Heart left ventricle (tissue), 16 donors: ENCODE measurements at regions of chr7 and their contacts with region 1.

Region 1: DNA sequence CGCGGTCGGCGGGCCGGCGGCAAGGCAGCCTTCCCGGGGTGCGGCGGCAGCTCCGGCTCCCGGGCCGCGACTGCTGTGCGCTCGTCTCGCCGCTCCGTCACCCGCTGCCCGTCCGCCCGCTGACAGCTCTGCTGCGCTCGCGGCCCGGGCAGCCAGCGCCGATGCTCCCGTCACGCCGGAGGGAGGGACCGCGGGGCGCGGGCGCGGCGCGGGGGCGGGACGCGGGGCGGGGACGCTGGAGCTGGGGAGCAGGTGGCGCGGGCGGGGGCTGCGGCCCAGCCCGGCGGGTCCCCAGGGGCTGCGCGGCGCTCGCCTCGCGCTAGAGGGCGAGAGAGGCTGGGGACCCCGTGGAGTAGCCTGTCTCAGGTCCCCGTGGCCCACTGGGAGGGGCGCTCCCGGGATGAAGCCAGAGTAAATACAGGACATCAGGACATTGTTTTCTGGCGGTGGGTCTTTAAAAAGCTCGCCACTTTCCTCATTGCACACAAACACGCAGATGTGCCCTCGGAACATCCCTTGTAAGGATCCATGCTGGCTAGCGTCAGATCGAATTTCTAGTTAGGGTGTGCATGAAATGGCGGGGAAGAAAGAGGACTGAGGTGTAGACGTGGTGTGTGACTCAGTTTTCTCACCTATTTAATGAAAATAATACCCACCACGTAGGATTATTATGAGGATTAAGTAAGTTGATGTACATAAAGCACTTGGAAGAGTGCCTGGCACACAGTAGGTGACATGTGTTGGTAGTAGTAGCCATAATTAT is at the start of gene ELAPOR2:
- DNase-seq: peak; percentile 80 to 86 (median 81)
- ATAC-seq: peak; percentile 82 to 99 (median 97)
- H3K4me3 ChIP-seq: peak within 1 kb of the TSS; percentile 39 to 88 (median 66)
- H3K27ac ChIP-seq: peak within 1 kb of the TSS in 9 of 12 donors; percentile 10 to 62 (median 35)
- H3K4me1 ChIP-seq: peaks cover 0 to 36% (median 11%) of the 10 kb centered on the region in 12 donors
- H3K27me3 ChIP-seq: peaks cover 0 to 13% (median 0%) of the 10 kb centered on the region in 9 donors
- CTCF ChIP-seq: peak; percentile 13 to 68 (median 54)
- POLR2A ChIP-seq: peak in 1 of 2 donors; percentile 52
- total RNA-seq, gene ELAPOR2: 2.5 to 9.9 (median 4.4) TPM

Region 2: DNA sequence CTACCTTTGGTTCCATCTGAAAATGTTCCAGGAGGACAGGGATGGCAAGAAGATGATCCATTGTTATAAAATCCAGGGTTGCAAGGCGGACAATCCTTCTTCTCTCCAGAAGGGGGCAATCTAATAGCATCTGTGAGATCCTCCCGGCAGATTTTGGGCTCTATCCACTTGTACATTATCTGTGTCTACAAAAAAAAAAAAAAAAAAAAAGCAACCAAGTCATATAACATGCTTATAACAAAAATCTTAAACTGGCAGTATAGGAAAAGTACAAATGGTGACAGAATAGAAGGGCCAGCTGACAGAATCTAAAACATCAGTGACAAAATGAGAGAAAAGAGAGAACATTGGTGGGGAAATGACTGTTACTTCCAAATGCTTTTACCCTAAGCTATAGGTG is 133.0 kb before region 1 on chr7:
- intact Hi-C with region 1: loop called in 2 of 10 experiments (anchors 5 to 10 kb)
- DNase-seq: no peak
- ATAC-seq: peak in 2 of 4 donors; percentile 38 to 59
- H3K4me3 ChIP-seq: no peak overlapping the region
- H3K27ac ChIP-seq: no peak overlapping the region
- H3K4me1 ChIP-seq: peaks cover 0 to 5% (median 2%) of the 10 kb centered on the region in 12 donors
- H3K27me3 ChIP-seq: no peaks in the 10 kb centered on the region
- CTCF ChIP-seq: peak; percentile 37 to 74 (median 64)
- POLR2A ChIP-seq: no peak

Region 3: DNA sequence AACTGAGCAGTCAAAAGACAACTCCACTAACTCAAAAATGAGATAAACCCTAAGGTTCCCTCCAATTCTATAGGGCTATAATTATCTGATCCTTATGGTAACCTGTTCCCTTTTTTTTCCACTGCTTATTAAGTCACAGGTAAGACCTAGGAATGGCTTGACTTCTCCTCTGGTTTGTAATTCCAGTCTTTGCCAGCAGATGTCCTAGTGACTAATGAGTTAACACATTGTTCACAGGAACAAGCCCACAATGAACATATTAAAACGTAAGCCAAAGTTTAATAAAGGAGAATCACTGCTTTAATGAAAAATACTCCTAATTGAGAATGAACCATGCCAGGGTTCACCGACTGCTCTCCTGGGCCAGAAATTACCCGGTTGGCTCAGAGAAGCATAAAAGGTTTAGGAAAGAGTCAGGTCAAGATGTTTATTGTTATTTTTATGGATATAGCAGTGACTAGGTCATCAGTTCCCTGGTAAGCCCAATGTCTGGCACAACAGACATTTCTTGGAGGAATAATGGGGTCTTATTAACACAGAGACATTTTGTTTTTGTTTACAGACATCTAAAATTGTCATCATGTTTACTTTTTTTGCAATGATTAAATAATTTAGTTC is 120.4 kb before region 1 on chr7:
- intact Hi-C with region 1: loop called in 6 of 10 experiments (anchors 5 to 10 kb)
- DNase-seq: peak in 2 of 5 donors; percentile 26 to 29
- ATAC-seq: peak in 3 of 4 donors; percentile 52 to 76 (median 54)
- H3K4me3 ChIP-seq: no peak overlapping the region
- H3K27ac ChIP-seq: no peak overlapping the region
- H3K4me1 ChIP-seq: no peaks in the 10 kb centered on the region
- H3K27me3 ChIP-seq: no peaks in the 10 kb centered on the region
- CTCF ChIP-seq: peak; percentile 54 to 76 (median 72)
- POLR2A ChIP-seq: no peak

Region 4: DNA sequence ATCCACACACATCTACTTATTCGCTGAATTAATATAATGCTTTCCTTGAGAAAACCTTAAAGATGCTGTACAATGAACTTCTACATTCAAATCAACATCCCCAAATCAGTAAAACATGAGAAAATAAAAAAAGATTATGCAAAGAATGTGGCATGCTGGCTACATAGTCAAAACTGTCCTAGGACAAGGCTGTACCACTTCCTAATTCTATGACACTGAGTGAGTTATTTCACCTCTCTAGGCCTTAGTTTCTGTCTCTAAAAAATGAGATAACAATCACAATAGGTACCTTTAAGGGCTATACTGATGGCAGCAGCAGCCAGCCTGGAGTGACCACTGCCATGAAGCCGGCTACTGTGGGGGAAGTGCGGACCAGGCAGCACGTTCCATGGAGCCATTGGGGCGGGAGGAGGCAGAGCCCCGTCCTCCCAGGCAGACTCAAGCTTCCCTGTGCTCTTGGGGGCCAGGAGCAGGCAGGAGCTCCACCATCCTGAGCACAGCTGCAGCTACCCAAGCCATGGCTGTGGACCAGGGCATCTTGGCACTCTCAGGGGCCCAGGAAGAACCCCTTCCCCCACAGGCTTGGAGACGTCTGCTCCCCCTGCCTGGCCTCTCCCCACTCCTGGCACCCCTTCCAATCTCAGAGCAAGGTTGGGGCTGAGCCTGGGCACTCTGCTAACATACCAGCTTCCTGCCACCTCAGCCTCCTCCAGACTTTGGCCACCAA is 110.5 kb before region 1 on chr7:
- intact Hi-C with region 1: loop called in 2 of 10 experiments (anchors 5 to 10 kb)
- DNase-seq: peak in 1 of 5 donors; percentile 51
- ATAC-seq: no peak
- H3K4me3 ChIP-seq: no peak overlapping the region
- H3K27ac ChIP-seq: no peak overlapping the region
- H3K4me1 ChIP-seq: peaks cover 0 to 5% (median 0%) of the 10 kb centered on the region in 12 donors
- H3K27me3 ChIP-seq: no peaks in the 10 kb centered on the region
- CTCF ChIP-seq: no peak
- POLR2A ChIP-seq: no peak

Region 5: GRCh38 chr7:87152107-87152844 is 92.6 kb after region 1 on chr7 and contains the start of gene DMTF1:
- intact Hi-C with region 1: loop called in 6 of 10 experiments (anchors 2 to 10 kb)
- DNase-seq: peak; percentile 95 to 97 (median 96)
- ATAC-seq: peak; percentile 97 to 98 (median 97)
- H3K4me3 ChIP-seq: peak within 1 kb of the TSS; percentile 61 to 89 (median 80)
- H3K27ac ChIP-seq: peak within 1 kb of the TSS; percentile 91 to 99 (median 96)
- H3K4me1 ChIP-seq: peaks cover 7 to 58% (median 44%) of the 10 kb centered on the region in 12 donors
- H3K27me3 ChIP-seq: no peaks in the 10 kb centered on the region
- CTCF ChIP-seq: peak in 2 of 12 donors; percentile 7 to 24
- POLR2A ChIP-seq: peak in 1 of 2 donors; percentile 70
- total RNA-seq, gene DMTF1: 17.7 to 43.3 (median 22.3) TPM

Region 6: DNA sequence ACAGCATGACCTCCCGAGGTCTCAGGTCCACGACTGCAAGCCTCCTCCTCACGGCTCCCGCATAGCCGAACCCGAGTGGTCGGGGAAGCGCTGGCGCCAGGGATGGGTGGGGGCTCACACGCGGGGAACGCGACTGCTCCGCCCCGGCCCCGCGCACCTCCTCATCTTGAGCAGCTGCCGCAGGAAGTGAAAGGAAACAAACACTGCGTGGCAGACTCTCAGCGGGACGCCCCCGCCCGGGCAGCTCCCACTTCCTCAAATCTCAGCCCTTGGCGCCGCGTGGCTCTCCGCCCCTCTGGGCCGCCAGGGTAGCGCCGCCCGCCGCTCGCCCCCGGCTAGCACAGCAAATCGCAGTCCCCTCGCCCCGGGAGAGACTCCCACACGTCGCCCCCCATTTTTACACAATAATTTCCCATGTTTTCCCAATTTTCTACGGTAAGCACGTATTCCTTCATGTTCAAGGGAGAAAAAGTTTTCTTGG is 159.9 kb after region 1 on chr7 and contains the start of gene TMEM243:
- intact Hi-C with region 1: loop called in 3 of 10 experiments (anchors 10 kb)
- DNase-seq: peak; percentile 83 to 92 (median 86)
- ATAC-seq: peak; percentile 74 to 93 (median 90)
- H3K4me3 ChIP-seq: peak within 1 kb of the TSS; percentile 65 to 94 (median 86)
- H3K27ac ChIP-seq: peak within 1 kb of the TSS; percentile 66 to 91 (median 87)
- H3K4me1 ChIP-seq: peaks cover 0 to 48% (median 12%) of the 10 kb centered on the region in 12 donors
- H3K27me3 ChIP-seq: peaks cover 0 to 15% (median 0%) of the 10 kb centered on the region in 9 donors
- CTCF ChIP-seq: peak in 5 of 12 donors; percentile 3 to 35 (median 19)
- POLR2A ChIP-seq: peak in 1 of 2 donors; percentile 51
- total RNA-seq, gene TMEM243: 1.8 to 13.1 (median 4.0) TPM

Region 7: DNA sequence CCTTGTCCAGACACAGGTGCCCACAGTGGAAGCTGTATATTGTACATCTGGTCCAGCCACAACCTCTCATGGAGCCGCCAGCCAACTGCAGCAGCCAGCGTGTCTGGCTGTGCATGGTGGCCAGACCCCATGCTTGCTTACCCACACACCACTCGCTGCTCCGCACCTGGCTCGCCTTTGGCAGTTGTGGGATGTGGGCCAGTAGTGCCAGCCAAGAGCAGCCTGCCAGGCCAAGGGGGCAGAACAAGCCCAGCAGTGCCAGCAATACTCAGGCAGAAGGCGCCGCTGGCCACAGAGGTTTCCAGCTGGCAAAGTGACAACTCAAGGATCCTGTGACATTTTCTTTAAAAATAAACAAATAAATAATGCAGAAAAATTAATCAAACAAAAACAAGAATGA is 171.6 kb after region 1 on chr7:
- intact Hi-C with region 1: loop called in 3 of 10 experiments (anchors 5 to 10 kb)
- DNase-seq: peak; percentile 20 to 77 (median 35)
- ATAC-seq: peak; percentile 59 to 80 (median 68)
- H3K4me3 ChIP-seq: no peak overlapping the region
- H3K27ac ChIP-seq: no peak overlapping the region
- H3K4me1 ChIP-seq: peaks cover 0 to 8% (median 0%) of the 10 kb centered on the region in 12 donors
- H3K27me3 ChIP-seq: no peaks in the 10 kb centered on the region
- CTCF ChIP-seq: no peak
- POLR2A ChIP-seq: no peak